Right cardiac atrium (tissue), 5 donors: ENCODE measurements at regions of chr1 and their contacts with region 1.

Region 1: DNA sequence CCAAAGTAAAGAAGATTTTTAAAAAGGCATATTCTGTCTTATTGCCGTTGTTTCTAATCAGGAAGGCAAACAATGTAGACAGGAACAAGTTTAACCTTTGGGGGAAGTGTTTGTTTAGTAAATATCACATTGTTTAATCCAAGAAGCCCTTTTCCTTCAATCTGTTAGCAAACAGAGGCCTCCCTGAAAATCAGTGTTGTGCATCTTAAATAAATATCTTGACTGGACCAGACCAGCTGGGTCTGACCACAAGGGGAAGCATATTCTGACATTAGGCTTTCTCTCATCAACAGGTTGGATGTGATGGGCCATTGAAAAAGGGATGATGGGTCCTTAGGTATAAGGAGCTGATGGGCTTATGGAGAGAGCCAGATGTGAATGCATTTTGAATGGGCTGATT is 81.8 kb upstream of the SGIP1 start:
- DNase-seq: no peak
- ATAC-seq: no peak
- H3K4me3 ChIP-seq: no peak overlapping the region
- H3K27ac ChIP-seq: no peak overlapping the region
- H3K4me1 ChIP-seq: no peaks in the 10 kb centered on the region
- H3K27me3 ChIP-seq: no peaks in the 10 kb centered on the region

Region 2: GRCh38 chr1:66300972-66301451 is 151.2 kb before region 1 on chr1:
- intact Hi-C with region 1: no loop called
- DNase-seq: no peak
- ATAC-seq: peak; percentile 62 to 73
- H3K4me3 ChIP-seq: peak overlapping the region; percentile 65
- H3K27ac ChIP-seq: peak overlapping the region; percentile 77
- H3K4me1 ChIP-seq: peaks cover 7% of the 10 kb centered on the region
- H3K27me3 ChIP-seq: no peaks in the 10 kb centered on the region

Region 3: DNA sequence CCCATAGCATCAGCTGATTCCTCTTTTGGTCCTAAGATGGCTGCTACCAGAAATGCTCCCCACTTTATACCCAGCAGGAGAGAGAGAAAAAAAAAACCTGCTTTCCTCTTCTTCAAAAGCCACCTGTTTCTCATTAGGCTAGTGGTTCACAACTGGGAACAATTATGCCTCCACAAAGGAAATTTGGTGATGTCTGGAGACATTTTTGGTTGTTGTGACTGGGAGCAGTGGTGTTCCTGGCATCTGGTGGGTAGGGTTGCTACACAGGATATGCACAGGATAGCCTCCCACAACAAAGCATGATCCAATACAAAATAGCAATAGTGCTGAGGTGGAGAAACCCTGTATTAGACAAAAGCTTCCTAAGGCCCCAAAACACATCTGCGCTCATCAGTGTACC is 43.3 kb after region 1 on chr1:
- intact Hi-C with region 1: loop called in 2 of 4 experiments (anchors 5 to 10 kb)
- DNase-seq: no peak
- ATAC-seq: no peak
- H3K4me3 ChIP-seq: no peak overlapping the region
- H3K27ac ChIP-seq: no peak overlapping the region
- H3K4me1 ChIP-seq: no peaks in the 10 kb centered on the region
- H3K27me3 ChIP-seq: no peaks in the 10 kb centered on the region

Region 4: DNA sequence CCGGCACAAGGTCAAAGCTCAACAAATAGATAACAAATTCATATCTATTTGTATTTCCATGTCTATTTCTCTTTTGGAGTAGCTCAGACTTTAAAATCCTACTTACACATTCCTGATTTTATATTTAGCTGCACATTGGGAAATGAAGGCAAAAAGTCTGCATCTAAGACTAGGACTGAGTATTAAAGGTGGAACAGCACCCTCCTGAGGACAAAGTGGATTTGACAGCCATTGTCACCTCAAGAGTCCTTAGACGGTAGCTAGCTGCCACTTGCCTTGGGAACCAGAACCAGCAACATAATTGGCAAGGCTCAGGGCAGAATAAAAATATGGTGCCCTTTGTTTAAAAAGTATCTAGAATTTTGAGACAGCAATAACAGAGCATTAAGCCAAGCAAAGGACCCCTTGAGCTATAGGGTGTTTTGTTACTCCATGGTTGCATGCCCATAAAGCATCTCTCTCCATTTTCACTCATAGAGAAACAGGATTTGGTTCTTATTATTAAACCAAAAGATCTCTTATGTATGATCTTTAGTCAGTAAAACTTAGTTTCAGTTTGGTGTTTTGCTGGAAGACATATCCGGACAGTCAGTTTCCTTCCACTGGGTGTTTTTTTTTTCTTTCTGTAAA is 51.8 kb after region 1 on chr1:
- intact Hi-C with region 1: loop called in 2 of 4 experiments (anchors 5 to 10 kb)
- DNase-seq: peak in 1 of 3 donors; percentile 39
- ATAC-seq: peak; percentile 71 to 72
- H3K4me3 ChIP-seq: no peak overlapping the region
- H3K27ac ChIP-seq: no peak overlapping the region
- H3K4me1 ChIP-seq: no peaks in the 10 kb centered on the region
- H3K27me3 ChIP-seq: no peaks in the 10 kb centered on the region

Region 5: DNA sequence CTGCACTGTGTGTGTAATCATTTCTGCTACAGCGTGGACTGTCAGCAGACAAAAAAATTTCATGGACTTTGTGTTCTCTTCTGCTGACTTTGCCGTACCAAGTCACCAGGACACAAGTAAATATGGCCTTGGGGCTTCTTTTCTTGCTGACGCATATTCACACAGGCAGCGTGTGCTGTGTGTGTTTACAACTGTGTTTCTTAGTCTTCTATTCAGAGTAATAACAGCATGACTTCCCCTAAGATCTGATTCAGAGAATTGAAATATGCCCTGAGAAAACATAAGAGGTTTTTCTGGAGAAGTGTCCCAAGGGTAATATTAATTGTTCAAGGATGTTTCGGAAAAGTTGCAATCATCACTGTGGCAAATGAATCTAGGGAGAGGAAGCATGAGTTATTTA is 252.9 kb after region 1 on chr1:
- intact Hi-C with region 1: no loop called
- DNase-seq: no peak
- ATAC-seq: no peak
- H3K4me3 ChIP-seq: no peak overlapping the region
- H3K27ac ChIP-seq: no peak overlapping the region
- H3K4me1 ChIP-seq: no peaks in the 10 kb centered on the region
- H3K27me3 ChIP-seq: peaks cover 2% of the 10 kb centered on the region